ENCODE measurements at regions of chr1 and their contacts with region 1.

Region 1: GRCh38 chr1:201530741-201531531 is 8.0 kb upstream of the NAV1 start:
- DNase-seq: peak; percentile 91 to 96 (median 94)
- ATAC-seq: peak; percentile 90 to 91
- H3K4me3 ChIP-seq: no peak overlapping the region
- H3K27ac ChIP-seq: peak overlapping the region; percentile 67
- H3K4me1 ChIP-seq: peaks cover 7% of the 10 kb centered on the region
- H3K27me3 ChIP-seq: no peaks in the 10 kb centered on the region

Region 2: GRCh38 chr1:201481761-201482493 is 49.0 kb before region 1 on chr1:
- intact Hi-C with region 1: no loop called
- DNase-seq: peak; percentile 90 to 95 (median 95)
- ATAC-seq: peak; percentile 87 to 92
- H3K4me3 ChIP-seq: peak overlapping the region; percentile 1
- H3K27ac ChIP-seq: peak overlapping the region; percentile 12
- H3K4me1 ChIP-seq: peaks cover 6% of the 10 kb centered on the region
- H3K27me3 ChIP-seq: no peaks in the 10 kb centered on the region

Region 3: DNA sequence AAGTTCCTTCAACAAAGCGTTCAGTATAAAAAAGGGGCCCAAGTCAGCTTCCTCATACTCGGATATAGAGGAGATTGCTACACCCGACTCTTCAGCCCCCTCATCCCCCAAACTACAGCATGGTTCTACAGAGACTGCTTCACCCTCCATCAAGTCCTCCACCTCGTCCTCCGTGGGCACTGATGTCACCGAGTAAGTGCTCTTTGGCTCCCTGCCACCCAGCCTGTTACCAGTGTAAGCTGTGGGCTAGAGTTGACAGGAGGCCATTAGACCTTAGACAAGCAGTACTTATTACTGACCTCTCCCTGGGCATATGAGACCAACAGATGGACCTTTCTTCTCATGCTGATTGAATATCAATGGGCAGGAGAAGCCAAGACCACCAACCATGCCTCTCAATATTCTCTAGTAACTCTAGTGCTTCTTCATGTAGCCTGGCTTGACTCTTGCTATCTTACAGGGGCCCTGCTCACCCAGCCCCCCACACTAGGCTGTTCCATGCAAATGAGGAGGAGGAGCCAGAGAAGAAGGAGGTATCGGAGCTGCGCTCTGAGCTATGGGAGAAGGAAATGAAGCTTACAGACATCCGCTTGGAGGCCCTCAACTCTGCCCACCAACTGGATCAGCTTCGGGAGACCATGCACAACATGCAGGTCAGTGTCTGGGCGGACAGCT is 277.2 kb after region 1 on chr1:
- intact Hi-C with region 1: loop called in 1 of 4 experiments (anchors 10 kb)
- DNase-seq: peak in 1 of 3 donors; percentile 53
- ATAC-seq: no peak
- H3K4me3 ChIP-seq: no peak overlapping the region
- H3K27ac ChIP-seq: no peak overlapping the region
- H3K4me1 ChIP-seq: no peaks in the 10 kb centered on the region
- H3K27me3 ChIP-seq: no peaks in the 10 kb centered on the region

Measured in right cardiac atrium (tissue), 5 donors.